ENCODE measurements at regions of chr7 and their contacts with region 1.

Region 1: GRCh38 chr7:114865564-114865963 is 56.3 kb upstream of the MDFIC start:
- DNase-seq: peak; percentile 80
- H3K4me3 Mint-ChIP-seq: no peak overlapping the region
- H3K27ac Mint-ChIP-seq: no peak overlapping the region
- H3K4me1 Mint-ChIP-seq: peaks cover 7% of the 10 kb centered on the region
- H3K27me3 Mint-ChIP-seq: no peaks in the 10 kb centered on the region

Region 2: DNA sequence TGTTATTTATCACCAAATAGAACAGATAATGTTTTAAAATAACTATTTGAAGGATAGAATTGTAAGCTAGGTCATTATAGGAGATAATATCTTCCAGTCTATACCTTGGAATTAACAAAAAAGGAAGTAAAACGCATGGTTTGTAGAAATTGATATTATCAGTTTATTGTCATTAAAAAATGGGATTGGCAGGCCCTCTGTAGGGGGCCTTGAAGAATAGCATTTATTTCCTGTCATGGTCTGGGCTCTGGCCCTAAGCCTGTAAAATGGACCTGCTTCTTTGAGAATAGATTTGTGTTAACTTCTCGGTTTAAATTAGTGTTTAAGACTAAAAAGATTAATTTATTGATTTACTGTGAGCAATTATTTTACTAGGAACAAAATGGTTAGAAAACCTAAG is 648.5 kb before region 1 on chr7:
- CTCF ChIA-PET with region 1: no interaction called
- intact Hi-C with region 1: no loop called
- DNase-seq: no peak
- H3K4me3 Mint-ChIP-seq: no peak overlapping the region
- H3K27ac Mint-ChIP-seq: no peak overlapping the region
- H3K4me1 Mint-ChIP-seq: no peaks in the 10 kb centered on the region
- H3K27me3 Mint-ChIP-seq: no peaks in the 10 kb centered on the region

Region 3: GRCh38 chr7:114426382-114427223 is 439.0 kb before region 1 on chr7:
- CTCF ChIA-PET with region 1: no interaction called
- intact Hi-C with region 1: loop called (anchors 10 kb)
- DNase-seq: no peak
- H3K4me3 Mint-ChIP-seq: no peak overlapping the region
- H3K27ac Mint-ChIP-seq: no peak overlapping the region
- H3K4me1 Mint-ChIP-seq: no peaks in the 10 kb centered on the region
- H3K27me3 Mint-ChIP-seq: no peaks in the 10 kb centered on the region

Region 4: DNA sequence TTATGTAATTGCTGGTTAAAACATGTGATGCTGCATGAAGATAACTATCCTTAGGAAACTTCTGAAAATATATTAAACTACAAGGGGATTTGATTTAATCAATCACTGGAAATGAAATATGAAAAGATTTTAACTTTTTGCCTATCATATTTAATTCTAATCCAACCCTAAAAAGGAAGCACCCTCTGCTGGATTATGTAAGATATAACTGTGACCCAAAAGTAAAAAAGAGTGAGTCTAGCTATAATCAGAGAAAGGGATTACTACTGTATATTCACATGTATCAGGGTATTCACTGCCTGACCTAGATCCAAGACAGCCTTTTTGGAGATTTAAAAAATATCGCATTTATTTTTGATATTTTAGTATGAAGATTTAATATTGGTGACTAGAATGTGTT is 351.8 kb after region 1 on chr7:
- CTCF ChIA-PET with region 1: interaction called, 36 read pairs
- intact Hi-C with region 1: loop called (anchors 1 kb)
- DNase-seq: no peak
- H3K4me3 Mint-ChIP-seq: no peak overlapping the region
- H3K27ac Mint-ChIP-seq: no peak overlapping the region
- H3K4me1 Mint-ChIP-seq: peaks cover 10% of the 10 kb centered on the region
- H3K27me3 Mint-ChIP-seq: no peaks in the 10 kb centered on the region

Region 5: GRCh38 chr7:115475761-115476385 is 610.3 kb after region 1 on chr7:
- CTCF ChIA-PET with region 1: no interaction called
- intact Hi-C with region 1: loop called (anchors 1 kb)
- DNase-seq: peak; percentile 26
- H3K4me3 Mint-ChIP-seq: no peak overlapping the region
- H3K27ac Mint-ChIP-seq: no peak overlapping the region
- H3K4me1 Mint-ChIP-seq: peaks cover 6% of the 10 kb centered on the region
- H3K27me3 Mint-ChIP-seq: peaks cover 26% of the 10 kb centered on the region

Region 6: DNA sequence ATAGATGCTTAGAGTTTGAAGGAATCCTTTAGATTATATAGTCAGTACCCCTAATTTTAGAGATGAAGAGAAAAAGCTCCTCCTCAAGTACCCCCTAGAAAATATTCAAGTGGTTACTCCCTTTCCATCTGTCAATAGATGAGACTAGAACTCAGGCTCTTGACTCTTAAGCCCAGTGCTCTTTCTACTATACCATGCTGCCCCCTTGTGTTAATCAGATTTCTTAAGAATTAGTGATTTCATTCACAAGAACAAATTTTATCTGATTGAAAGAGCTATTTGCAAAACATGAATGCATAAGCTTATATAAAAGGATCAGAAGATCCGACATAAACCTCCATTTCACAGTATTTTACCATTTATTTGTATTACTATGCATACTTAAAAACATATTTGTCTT is 985.7 kb after region 1 on chr7:
- CTCF ChIA-PET with region 1: interaction called, 6 read pairs
- intact Hi-C with region 1: loop called (anchors 1 kb)
- DNase-seq: no peak
- H3K4me3 Mint-ChIP-seq: no peak overlapping the region
- H3K27ac Mint-ChIP-seq: no peak overlapping the region
- H3K4me1 Mint-ChIP-seq: no peaks in the 10 kb centered on the region
- H3K27me3 Mint-ChIP-seq: no peaks in the 10 kb centered on the region

Measured in activated naive CD4-positive, alpha-beta T cell treated with anti-CD3 and anti-CD28 coated beads for 36 hours (primary cell).